ENCODE measurements at regions of chr1 and their contacts with region 1.

Region 1: DNA sequence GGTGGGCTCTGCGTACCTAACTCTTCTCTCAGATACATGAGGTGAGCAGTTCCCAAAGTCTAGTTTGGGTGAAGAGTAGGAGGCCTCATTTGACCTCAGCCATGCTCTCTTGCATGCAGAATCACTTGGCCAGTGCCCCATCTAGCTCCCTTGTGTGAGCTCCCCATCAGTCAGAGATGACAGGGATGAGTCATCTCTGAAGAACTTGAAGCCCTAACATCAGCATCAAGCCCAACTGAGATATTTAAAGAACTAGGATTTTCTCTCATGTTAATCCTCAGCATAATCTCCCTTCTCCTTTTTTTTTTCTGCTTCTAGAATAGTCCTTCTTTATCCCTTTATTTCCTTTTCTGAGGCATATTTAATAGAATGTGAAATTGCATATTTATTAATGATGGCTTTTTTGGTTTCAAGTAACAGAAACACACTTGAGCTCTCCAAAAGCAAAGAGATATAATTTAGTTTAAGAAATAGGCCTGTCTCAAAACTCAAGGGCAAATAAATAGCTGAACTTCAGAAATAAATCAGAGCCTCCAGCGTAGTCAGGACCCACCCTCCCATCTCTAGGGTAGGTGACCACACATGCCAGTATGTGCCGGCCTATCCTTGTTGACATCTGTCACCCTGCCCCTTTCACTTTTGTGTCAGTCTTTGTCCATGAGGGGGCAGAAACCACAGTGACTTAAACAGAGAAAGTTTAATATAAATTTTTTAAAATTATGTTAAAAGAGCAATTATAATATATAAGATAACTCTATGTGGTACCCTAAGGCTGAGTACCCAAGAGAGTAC is 112.3 kb downstream of the TSEN15 start:
- DNase-seq: peak; percentile 20
- H3K4me3 Mint-ChIP-seq: no peak overlapping the region
- H3K27ac Mint-ChIP-seq: no peak overlapping the region
- H3K4me1 Mint-ChIP-seq: peaks cover 24% of the 10 kb centered on the region
- H3K27me3 Mint-ChIP-seq: peaks cover 12% of the 10 kb centered on the region

Region 2: DNA sequence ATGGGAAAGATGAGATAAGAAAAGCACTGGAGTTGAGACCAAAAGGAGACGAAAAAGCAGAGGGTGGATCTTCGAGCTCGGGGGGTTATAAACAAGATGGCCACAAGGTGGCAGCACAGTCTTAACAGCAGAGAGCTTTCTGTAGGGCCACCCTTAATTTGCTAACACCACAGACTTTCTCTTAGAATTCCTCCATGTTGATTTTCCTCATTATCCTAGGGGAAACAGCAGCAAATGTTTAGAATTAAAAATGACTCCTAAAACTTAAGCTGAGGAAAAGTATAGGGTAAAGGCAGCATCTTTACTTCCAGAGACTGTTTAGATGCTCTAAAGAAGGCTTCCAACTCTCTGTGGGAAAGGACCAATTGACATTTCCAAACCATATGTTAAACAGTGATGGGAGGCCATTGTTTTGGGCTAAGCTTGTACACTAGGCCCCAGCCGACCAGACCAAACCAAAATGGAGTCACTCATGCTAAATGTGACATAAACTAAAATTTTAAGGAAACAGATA is 508.3 kb before region 1 on chr1:
- intact Hi-C with region 1: loop called (anchors 2 kb)
- DNase-seq: peak; percentile 52
- H3K4me3 Mint-ChIP-seq: no peak overlapping the region
- H3K27ac Mint-ChIP-seq: peak overlapping the region; percentile 0
- H3K4me1 Mint-ChIP-seq: peaks cover 48% of the 10 kb centered on the region
- H3K27me3 Mint-ChIP-seq: no peaks in the 10 kb centered on the region

Region 3: GRCh38 chr1:184036517-184036949 is 127.3 kb before region 1 on chr1:
- intact Hi-C with region 1: no loop called
- DNase-seq: no peak
- H3K4me3 Mint-ChIP-seq: peak overlapping the region; percentile 69
- H3K27ac Mint-ChIP-seq: no peak overlapping the region
- H3K4me1 Mint-ChIP-seq: peaks cover 26% of the 10 kb centered on the region
- H3K27me3 Mint-ChIP-seq: peaks cover 74% of the 10 kb centered on the region

Region 4: DNA sequence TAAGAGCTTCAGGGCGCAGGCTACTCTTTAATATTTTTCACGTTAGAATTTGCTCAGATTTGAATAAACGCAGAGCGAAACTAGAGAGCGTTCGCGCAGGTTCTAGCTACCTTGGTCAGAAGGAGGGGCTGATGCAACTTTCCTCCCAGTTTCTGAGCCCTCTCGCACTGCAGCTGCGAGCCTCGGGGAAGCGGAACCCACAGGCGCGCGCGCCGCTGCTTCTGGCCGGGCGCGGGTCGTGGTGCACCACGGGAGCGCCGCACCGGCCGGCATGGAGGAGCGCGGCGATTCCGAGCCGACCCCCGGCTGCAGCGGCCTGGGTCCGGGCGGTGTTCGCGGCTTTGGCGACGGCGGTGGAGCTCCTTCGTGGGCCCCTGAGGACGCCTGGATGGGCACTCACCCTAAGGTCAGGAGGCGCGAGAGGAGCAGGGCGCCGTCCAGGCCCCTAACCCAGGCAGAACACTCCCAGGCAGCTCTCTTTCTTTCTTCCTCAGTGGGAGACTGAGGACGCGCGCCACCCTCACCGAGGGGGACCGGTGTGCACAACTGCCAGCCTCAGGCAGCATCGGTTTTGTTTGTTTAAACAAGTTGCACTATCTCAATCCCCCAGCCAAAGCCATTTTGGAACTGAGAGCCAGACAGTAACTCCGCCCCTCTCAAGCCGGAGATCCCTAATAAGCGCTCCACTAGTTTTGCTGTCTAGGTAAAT is 112.2 kb before region 1 on chr1 and contains the start of gene TSEN15:
- intact Hi-C with region 1: loop called (anchors 2 kb)
- DNase-seq: peak; percentile 71
- H3K4me3 Mint-ChIP-seq: peak within 1 kb of the TSS; percentile 99
- H3K27ac Mint-ChIP-seq: peak within 1 kb of the TSS; percentile 99
- H3K4me1 Mint-ChIP-seq: peaks cover 40% of the 10 kb centered on the region
- H3K27me3 Mint-ChIP-seq: peaks cover 28% of the 10 kb centered on the region
- total RNA-seq, gene TSEN15: 49.8 and 50.2 TPM in 2 replicates

Region 5: GRCh38 chr1:184386312-184387068 is 222.6 kb after region 1 on chr1 and contains the start of gene C1orf21:
- intact Hi-C with region 1: loop called (anchors 2 kb)
- DNase-seq: peak; percentile 75
- H3K4me3 Mint-ChIP-seq: peak within 1 kb of the TSS; percentile 86
- H3K27ac Mint-ChIP-seq: peak within 1 kb of the TSS; percentile 53
- H3K4me1 Mint-ChIP-seq: peaks cover 12% of the 10 kb centered on the region
- H3K27me3 Mint-ChIP-seq: peaks cover 71% of the 10 kb centered on the region
- total RNA-seq, gene C1orf21: 1.8 and 4.1 TPM in 2 replicates

Region 6: GRCh38 chr1:184892116-184892515 is 728.2 kb after region 1 on chr1:
- intact Hi-C with region 1: loop called (anchors 5 kb)
- DNase-seq: no peak
- H3K4me3 Mint-ChIP-seq: no peak overlapping the region
- H3K27ac Mint-ChIP-seq: peak overlapping the region; percentile 61
- H3K4me1 Mint-ChIP-seq: peaks cover 39% of the 10 kb centered on the region
- H3K27me3 Mint-ChIP-seq: no peaks in the 10 kb centered on the region

Measured in activated T-helper 1 cell treated with anti-CD3 and anti-CD28 coated beads, Interleukin-12 subunit alpha, Interleukin-12 subunit beta, Interleukin-2, Interleukin-4 antibody, amounts not matched to agents 30 ng/mL and 10 ng/mL and 1 ng/mL, durations not matched to agents 14 hours and 24 hours and 36 hours (primary cell).